ENCODE measurements at regions of chr2 and their contacts with region 1.

Region 1: GRCh38 chr2:39851651-39852110 is 72.6 kb upstream of the THUMPD2 start:
- DNase-seq: peak; percentile 87
- H3K4me3 ChIP-seq: peak overlapping the region; percentile 39
- H3K27ac ChIP-seq: peak overlapping the region; percentile 74
- H3K4me1 ChIP-seq: peaks cover 51% of the 10 kb centered on the region
- CTCF ChIP-seq: peak; percentile 67

Region 2: GRCh38 chr2:39778962-39779851 is 72.5 kb before region 1 on chr2 and contains the start of gene THUMPD2:
- CTCF ChIA-PET with region 1: no interaction called
- POLR2A ChIA-PET with region 1: no interaction called
- intact Hi-C with region 1: loop called (anchors 2 kb)
- DNase-seq: peak; percentile 87
- H3K4me3 ChIP-seq: peak within 1 kb of the TSS; percentile 91
- H3K27ac ChIP-seq: peak within 1 kb of the TSS; percentile 50
- H3K4me1 ChIP-seq: peaks cover 33% of the 10 kb centered on the region
- CTCF ChIP-seq: no peak
- total RNA-seq, gene THUMPD2: 21.4 and 24.6 TPM in 2 replicates

Region 3: GRCh38 chr2:39837856-39838453 is 13.7 kb before region 1 on chr2:
- CTCF ChIA-PET with region 1: interaction called, 5 read pairs
- POLR2A ChIA-PET with region 1: interaction called, 12 read pairs
- intact Hi-C with region 1: loop called (anchors 2 kb)
- DNase-seq: peak; percentile 78
- H3K4me3 ChIP-seq: no peak overlapping the region
- H3K27ac ChIP-seq: no peak overlapping the region
- H3K4me1 ChIP-seq: peaks cover 17% of the 10 kb centered on the region
- CTCF ChIP-seq: peak; percentile 99